Uterus (tissue), 4 donors: ENCODE measurements at regions of chr1 and their contacts with region 1.

Region 1: DNA sequence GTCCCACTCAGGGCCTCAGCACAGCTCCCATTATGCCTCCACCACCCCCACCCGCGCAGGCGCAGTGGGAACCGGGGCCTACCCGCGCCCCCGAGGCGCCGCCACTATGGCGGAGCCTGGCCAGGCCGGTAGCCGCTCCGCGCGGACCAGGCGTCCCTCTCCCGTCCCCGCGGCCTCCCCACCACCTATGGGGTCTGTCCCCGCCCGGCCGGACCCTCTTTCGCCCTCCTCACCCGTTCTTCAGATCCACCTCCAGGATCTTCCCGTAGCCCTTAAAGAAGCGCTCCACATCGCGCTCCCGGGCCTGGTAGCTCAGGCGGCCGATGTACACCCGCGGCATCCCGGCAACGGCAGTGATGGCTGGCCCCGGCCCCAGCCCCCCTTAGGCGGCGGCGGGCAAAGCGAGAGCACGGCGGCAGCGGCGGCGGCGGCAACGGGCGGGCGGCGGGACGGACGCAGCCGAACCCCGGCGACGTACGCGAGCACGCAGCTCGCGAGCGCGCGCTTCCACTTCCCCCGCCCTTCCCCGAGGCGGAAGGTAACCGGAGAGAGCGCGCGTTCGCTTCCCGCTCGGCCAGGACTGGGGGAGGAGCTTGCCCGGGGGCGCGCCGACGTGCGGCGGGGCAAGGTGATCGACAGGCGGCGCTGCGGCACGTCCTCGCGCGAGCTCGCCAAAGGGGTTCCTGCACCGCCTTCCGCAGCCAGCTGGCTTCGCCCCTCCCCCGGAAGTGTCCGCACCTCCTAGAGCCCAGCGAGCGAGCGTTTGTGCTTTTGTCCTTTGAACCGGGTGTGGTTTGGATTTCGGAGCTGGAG is at the start of gene SRSF4:
- DNase-seq: peak; percentile 99 to 100
- H3K4me3 ChIP-seq: peak within 1 kb of the TSS; percentile 89 to 96
- H3K27ac ChIP-seq: peak within 1 kb of the TSS; percentile 100
- H3K4me1 ChIP-seq: peaks cover 16 to 17% of the 10 kb centered on the region in 2 donors
- H3K27me3 ChIP-seq: no peaks in the 10 kb centered on the region
- CTCF ChIP-seq: peak; percentile 62 to 87 (median 75)
- POLR2A ChIP-seq: peak; percentile 70 to 98
- total RNA-seq, gene SRSF4: 60.0 to 129 (median 69.0) TPM

Region 2: GRCh38 chr1:29124366-29125236 is 57.0 kb before region 1 on chr1:
- intact Hi-C with region 1: loop called (anchors 10 kb)
- DNase-seq: peak; percentile 90 to 93
- H3K4me3 ChIP-seq: peak overlapping the region; percentile 73 to 80
- H3K27ac ChIP-seq: peak overlapping the region; percentile 94 to 100
- H3K4me1 ChIP-seq: peaks cover 0 to 8% of the 10 kb centered on the region in 2 donors
- H3K27me3 ChIP-seq: no peaks in the 10 kb centered on the region
- CTCF ChIP-seq: peak; percentile 79 to 99 (median 91)
- POLR2A ChIP-seq: peak; percentile 86 to 89